PC-3 (cell line): ENCODE measurements at regions of chr12 and their contacts with region 1.

Region 1: GRCh38 chr12:89345830-89346740 is 6.2 kb downstream of the DUSP6 start:
- DNase-seq: peak; percentile 77
- ATAC-seq: peak; percentile 44
- H3K4me3 ChIP-seq: peak overlapping the region; percentile 39
- H3K27ac ChIP-seq: peak overlapping the region; percentile 37
- H3K4me1 ChIP-seq: peaks cover 37% of the 10 kb centered on the region
- H3K27me3 ChIP-seq: no peaks in the 10 kb centered on the region
- CTCF ChIP-seq: no peak

Region 2: DNA sequence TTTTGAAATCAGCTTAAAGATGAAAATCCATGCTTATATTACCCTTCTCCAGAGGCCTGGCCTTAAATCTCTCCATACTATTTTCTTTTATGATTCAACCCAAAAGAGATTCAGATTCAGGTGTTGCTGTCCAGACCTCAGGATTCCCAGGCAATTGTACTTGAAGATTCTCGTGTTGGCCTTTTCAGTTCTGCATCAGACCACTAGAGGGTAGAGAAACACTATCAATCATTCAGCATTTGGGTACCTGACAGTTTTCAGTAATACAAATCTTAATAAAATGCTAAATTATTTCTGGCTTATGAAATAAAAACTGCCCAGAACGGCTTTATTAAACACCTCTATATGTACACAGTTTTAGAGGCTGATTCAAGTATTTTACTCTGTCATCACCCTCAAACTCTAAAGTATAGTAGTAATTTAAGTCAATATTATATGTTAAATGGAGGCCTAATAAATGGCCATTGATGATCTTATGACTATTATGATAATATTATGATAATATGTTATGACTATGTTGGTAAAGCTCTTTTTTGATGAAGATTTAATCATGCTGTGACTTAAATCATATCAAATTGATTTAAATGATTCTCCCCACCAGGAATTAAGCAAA is 294.9 kb before region 1 on chr12:
- CTCF ChIA-PET with region 1: no interaction called
- POLR2A ChIA-PET with region 1: no interaction called
- intact Hi-C with region 1: loop called (anchors 1 kb)
- DNase-seq: peak; percentile 86
- ATAC-seq: peak; percentile 73
- H3K4me3 ChIP-seq: no peak overlapping the region
- H3K27ac ChIP-seq: no peak overlapping the region
- H3K4me1 ChIP-seq: 0 out of 2 replicates have a peak, but pooled peaks cover 5% of the 10 kb centered on the region
- H3K27me3 ChIP-seq: no peaks in the 10 kb centered on the region
- CTCF ChIP-seq: peak; percentile 96

Region 3: DNA sequence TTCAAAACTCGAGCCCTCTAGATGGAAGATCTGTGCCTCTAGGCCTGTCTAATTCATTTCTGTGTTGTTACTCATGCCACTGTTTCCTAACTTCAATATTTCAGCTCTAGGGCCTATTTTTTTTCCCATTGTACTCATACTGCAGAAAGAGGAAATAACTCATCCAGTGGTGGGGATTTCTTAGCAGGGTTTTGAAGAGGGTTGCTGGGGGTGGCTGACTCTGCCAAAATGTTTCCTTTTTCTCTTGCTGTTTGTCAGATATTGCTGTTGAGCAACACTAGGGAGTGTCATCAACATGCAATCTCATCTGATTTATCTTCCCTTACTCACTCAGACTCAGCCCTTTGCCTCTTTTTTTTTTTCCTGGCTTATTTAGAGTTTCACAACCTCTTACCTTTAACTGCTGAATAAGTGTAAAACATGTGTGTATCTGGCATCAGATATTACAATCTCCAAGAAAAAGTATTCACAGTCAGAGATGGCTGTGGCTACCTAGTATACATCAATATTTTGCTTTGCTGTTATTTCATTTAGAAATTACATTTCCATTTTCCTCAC is 183.3 kb before region 1 on chr12:
- CTCF ChIA-PET with region 1: no interaction called
- POLR2A ChIA-PET with region 1: no interaction called
- intact Hi-C with region 1: loop called (anchors 5 kb)
- DNase-seq: peak; percentile 96
- ATAC-seq: peak; percentile 79
- H3K4me3 ChIP-seq: no peak overlapping the region
- H3K27ac ChIP-seq: peak overlapping the region; percentile 96
- H3K4me1 ChIP-seq: peaks cover 63% of the 10 kb centered on the region
- H3K27me3 ChIP-seq: no peaks in the 10 kb centered on the region
- CTCF ChIP-seq: no peak

Region 4: DNA sequence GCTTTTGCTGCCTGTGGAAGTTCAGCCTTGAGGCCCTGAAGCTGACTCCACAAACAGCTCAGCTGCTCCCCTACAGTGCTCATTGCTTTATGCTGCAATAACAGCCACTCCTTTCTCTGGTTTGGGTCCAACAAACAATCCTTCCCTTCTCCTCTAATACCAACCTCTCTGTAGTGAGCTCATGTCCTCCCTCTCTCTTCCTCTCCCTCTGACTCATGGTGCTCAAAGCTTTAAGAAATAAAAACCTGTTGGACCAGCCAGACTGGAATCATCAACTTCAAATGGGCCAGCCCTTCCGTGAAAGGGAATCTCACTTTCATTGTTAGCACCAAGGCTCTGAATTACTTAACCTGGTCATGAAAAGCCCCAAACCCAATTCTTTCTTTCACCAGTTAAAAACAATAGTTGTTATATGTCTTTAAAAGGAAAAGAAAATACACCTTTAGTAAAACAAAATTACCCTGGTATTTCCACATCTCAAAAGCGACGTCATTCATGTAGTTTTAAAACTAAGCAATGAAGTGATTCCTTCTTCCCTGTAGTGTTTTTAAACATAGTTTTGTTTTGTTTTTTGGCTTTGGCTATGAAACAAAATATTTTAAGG is 120.2 kb before region 1 on chr12:
- CTCF ChIA-PET with region 1: no interaction called
- POLR2A ChIA-PET with region 1: interaction called, 5 read pairs
- intact Hi-C with region 1: loop called (anchors 2 kb)
- DNase-seq: peak; percentile 99
- ATAC-seq: peak; percentile 97
- H3K4me3 ChIP-seq: peak overlapping the region; percentile 55
- H3K27ac ChIP-seq: peak overlapping the region; percentile 95
- H3K4me1 ChIP-seq: peaks cover 40% of the 10 kb centered on the region
- H3K27me3 ChIP-seq: no peaks in the 10 kb centered on the region
- CTCF ChIP-seq: no peak

Region 5: DNA sequence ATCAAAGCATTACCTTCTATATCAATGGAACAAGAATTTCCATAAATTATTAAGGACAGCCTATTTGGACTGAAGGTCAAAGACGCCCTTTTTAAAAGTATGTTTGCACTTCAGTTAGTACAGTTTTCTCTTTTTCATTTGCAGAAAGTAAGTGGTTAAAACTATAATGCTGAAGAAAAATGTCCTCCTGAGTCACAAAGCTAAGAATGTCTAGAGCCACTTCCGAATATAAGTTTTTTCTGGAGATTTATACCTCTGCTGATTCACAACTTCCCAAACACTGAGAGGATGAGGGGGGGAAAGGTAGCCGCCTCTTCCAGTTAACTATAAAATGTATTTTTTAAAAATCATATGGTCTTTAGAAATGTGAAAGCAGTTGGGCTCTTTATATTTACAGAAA is 78.7 kb before region 1 on chr12:
- CTCF ChIA-PET with region 1: no interaction called
- POLR2A ChIA-PET with region 1: interaction called, 9 read pairs
- intact Hi-C with region 1: loop called (anchors 1 kb)
- DNase-seq: peak; percentile 53
- ATAC-seq: peak; percentile 91
- H3K4me3 ChIP-seq: no peak overlapping the region
- H3K27ac ChIP-seq: 0 out of 2 replicates have a peak overlapping the region, but pooled peaks have one; percentile 5
- H3K4me1 ChIP-seq: peaks cover 15% of the 10 kb centered on the region
- H3K27me3 ChIP-seq: no peaks in the 10 kb centered on the region
- CTCF ChIP-seq: no peak

Region 6: GRCh38 chr12:90013409-90013808 is 667.3 kb after region 1 on chr12:
- CTCF ChIA-PET with region 1: no interaction called
- POLR2A ChIA-PET with region 1: no interaction called
- intact Hi-C with region 1: no loop called
- DNase-seq: no peak
- ATAC-seq: peak; percentile 43; the same call in 1 of the 2 replicates
- H3K4me3 ChIP-seq: no peak overlapping the region
- H3K27ac ChIP-seq: no peak overlapping the region
- H3K4me1 ChIP-seq: no peaks in the 10 kb centered on the region; the same call in 1 of the 2 replicates
- H3K27me3 ChIP-seq: no peaks in the 10 kb centered on the region
- CTCF ChIP-seq: peak; percentile 40